Heart right ventricle (tissue), 16 donors: ENCODE measurements at regions of chr17 and their contacts with region 1.

Region 1: DNA sequence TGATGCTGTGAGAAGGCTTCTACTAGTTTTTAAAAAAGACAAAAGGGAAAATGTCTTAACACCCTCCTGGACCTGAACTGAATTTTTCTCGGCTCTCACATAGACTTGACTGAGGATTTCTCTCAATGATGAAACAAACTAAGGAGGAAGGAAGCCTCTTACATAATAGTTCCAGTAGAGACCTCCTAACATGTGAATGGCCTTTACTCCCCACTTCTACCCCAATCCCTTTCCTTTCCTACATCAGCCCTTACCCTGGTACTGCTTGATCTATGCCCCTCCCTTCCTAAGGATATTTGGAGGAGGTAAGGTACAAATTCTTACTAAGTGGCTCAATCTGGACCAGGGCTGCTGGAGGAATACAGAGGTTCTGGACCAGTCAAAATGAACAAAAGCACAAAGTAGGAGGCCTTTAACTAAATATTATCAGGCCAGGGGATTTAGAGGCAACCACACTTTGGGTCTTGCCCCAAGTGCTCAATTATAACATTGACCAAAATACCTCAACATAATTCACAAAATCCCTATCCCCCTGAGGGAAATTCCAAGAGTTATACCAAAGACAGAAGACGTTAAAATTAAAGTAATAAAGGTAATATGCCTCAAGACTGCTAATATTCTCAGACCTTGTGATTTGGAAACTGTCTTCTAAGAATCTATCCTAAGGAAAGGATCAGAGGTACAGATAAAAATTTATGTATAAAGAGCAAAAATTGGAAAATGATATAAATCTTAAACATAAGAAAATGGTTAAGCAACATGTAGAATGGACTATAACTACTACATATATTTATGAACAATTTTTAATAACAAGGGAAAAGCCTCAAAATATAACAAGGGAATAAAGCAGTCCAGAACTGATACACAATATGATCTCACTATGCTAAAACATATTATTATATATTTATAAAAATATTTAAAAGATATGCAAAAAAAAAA is 55.1 kb upstream of the MTMR4 start:
- DNase-seq: no peak
- ATAC-seq: no peak
- H3K4me3 ChIP-seq: no peak overlapping the region
- H3K27ac ChIP-seq: no peak overlapping the region
- H3K4me1 ChIP-seq: peaks cover 0 to 13% (median 0%) of the 10 kb centered on the region in 9 donors
- H3K27me3 ChIP-seq: no peaks in the 10 kb centered on the region
- CTCF ChIP-seq: no peak

Region 2: GRCh38 chr17:58531661-58532554 is 37.6 kb before region 1 on chr17:
- intact Hi-C with region 1: loop called in 1 of 10 experiments (anchors 5 kb)
- DNase-seq: peak; percentile 53 to 78
- ATAC-seq: peak; percentile 75 to 91 (median 82)
- H3K4me3 ChIP-seq: peak overlapping the region; percentile 44 to 75 (median 64)
- H3K27ac ChIP-seq: peak overlapping the region; percentile 50 to 87 (median 68)
- H3K4me1 ChIP-seq: peaks cover 7 to 73% (median 50%) of the 10 kb centered on the region in 9 donors
- H3K27me3 ChIP-seq: peaks cover 0 to 19% (median 0%) of the 10 kb centered on the region in 7 donors
- CTCF ChIP-seq: no peak

Region 3: DNA sequence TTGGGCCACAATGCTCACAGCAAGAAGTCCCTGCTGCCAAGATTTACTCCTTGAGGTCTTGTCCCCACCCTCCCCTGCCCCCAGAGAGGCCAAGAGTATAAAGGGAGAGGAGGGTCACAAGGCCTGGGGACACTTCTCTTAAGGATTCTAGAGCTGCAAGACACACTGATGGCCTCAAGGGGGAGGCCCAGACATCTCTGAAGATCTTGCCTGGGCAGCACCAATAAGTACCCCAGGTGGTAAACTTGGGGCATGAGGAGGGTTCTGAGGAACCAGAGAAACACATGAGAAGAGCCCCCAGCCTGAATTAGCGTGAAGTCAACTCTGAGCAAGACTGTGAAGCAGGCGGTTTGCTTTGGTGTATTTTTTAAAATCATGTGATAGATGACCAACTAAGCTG is 28.3 kb before region 1 on chr17:
- intact Hi-C with region 1: loop called in 2 of 10 experiments (anchors 1 to 5 kb)
- DNase-seq: no peak
- ATAC-seq: no peak
- H3K4me3 ChIP-seq: no peak overlapping the region
- H3K27ac ChIP-seq: peak overlapping the region in 1 of 10 donors; percentile 26
- H3K4me1 ChIP-seq: peaks cover 7 to 41% (median 28%) of the 10 kb centered on the region in 9 donors
- H3K27me3 ChIP-seq: no peaks in the 10 kb centered on the region
- CTCF ChIP-seq: peak in 5 of 9 donors; percentile 7 to 37 (median 21)